Activated naive CD4-positive, alpha-beta T cell treated with anti-CD3 and anti-CD28 coated beads for 36 hours (primary cell): ENCODE measurements at regions of chr17 and their contacts with region 1.

Region 1: GRCh38 chr17:81238817-81239600 is at the starts of genes NDUFAF8 and TEPSIN:
- DNase-seq: peak; percentile 98
- H3K4me3 Mint-ChIP-seq: peak within 1 kb of the TSS; percentile 90
- H3K27ac Mint-ChIP-seq: peak within 1 kb of the TSS; percentile 96
- H3K4me1 Mint-ChIP-seq: peaks cover 37% of the 10 kb centered on the region
- H3K27me3 Mint-ChIP-seq: no peaks in the 10 kb centered on the region
- total RNA-seq, gene NDUFAF8: 75.7 to 77.0 TPM
- total RNA-seq, gene TEPSIN: 21.7 to 25.9 TPM

Region 2: DNA sequence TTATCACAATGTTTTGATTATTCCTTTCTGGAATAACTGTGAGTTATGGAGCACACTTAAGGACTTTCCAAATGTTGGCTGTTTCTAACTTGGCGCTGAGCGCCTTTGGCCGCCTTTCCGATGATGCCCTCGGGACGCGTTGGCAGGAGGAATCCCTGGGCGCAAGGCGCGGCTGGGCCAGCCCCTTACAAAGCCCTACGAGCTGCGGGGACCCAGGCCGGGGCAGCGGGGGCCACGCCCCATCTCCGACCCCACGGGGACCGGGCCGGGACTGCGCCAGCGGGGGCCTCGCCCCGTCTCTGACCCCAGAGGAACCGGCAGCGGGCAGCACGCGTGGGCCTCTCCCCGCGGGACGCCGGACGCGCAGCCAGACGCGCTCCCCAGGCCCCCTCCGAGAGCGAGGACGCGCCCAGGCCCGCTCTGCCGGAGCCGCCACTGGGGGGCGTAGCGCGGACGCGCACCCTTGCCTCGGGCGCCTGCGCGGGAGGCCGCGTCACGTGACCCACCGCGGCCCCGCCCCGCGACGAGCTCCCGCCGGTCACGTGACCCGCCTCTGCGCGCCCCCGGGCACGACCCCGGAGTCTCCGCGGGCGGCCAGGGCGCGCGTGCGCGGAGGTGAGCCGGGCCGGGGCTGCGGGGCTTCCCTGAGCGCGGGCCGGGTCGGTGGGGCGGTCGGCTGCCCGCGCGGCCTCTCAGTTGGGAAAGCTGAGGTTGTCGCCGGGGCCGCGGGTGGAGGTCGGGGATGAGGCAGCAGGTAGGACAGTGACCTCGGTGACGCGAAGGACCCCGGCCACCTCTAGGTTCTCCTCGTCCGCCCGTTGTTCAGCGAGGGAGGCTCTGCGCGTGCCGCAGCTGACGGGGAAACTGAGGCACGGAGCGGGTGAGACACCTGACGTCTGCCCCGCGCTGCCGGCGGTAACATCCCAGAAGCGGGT is 1137.7 kb before region 1 on chr17 and contains the start of gene GAA:
- CTCF ChIA-PET with region 1: no interaction called
- intact Hi-C with region 1: loop called (anchors 5 kb)
- DNase-seq: peak; percentile 84
- H3K4me3 Mint-ChIP-seq: peak within 1 kb of the TSS; percentile 92
- H3K27ac Mint-ChIP-seq: peak within 1 kb of the TSS; percentile 59
- H3K4me1 Mint-ChIP-seq: peaks cover 28% of the 10 kb centered on the region
- H3K27me3 Mint-ChIP-seq: no peaks in the 10 kb centered on the region
- total RNA-seq, gene GAA: 32.1 to 33.2 TPM

Region 3: DNA sequence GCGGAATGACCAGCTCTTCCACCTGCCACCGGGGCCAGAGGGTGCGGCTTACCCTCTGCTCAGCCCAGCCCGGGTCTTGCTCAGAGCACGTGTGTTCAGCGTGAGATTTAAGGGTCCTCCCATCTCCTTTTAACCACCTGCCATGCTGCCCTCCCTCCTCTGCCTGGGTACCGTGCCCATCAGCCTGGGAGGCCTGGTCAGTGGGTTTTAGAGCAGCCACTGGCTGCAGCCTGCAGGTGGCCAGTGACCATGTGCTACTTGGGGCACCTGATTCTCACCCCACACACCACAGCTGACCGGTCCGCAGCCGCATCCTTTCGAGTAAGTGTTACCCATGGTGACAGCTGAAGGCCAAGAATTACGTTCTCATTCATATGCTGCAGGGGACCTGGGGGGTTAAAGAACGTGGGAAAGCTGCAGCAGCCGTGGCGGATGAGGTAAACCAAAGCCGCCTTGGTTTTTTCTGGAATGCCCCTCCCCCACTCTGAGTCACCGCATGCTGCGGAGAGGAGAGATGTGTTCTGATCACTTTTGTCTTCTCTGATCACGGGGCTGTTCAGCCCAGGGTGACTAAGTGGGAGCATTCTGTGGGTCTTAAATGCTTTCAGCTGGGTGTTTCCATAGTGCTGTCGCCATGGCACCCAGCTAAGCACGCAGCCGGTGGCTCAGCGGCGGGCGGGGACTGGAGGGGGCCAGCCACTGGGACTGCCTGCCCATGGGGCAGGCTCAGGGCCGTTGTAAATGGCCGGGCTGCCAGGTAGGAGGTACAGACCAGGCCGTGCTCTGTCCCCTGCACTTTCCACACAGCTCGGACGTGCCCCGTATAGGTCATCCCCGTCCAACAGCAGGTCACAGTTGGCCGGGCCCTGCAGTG is 144.3 kb before region 1 on chr17:
- CTCF ChIA-PET with region 1: no interaction called
- intact Hi-C with region 1: loop called (anchors 1 kb)
- DNase-seq: peak; percentile 97
- H3K4me3 Mint-ChIP-seq: no peak overlapping the region
- H3K27ac Mint-ChIP-seq: no peak overlapping the region
- H3K4me1 Mint-ChIP-seq: peaks cover 30% of the 10 kb centered on the region
- H3K27me3 Mint-ChIP-seq: no peaks in the 10 kb centered on the region

Region 4: GRCh38 chr17:81142301-81143199 is 96.5 kb before region 1 on chr17:
- CTCF ChIA-PET with region 1: interaction called, 5 read pairs
- intact Hi-C with region 1: loop called (anchors 1 kb)
- DNase-seq: peak; percentile 76
- H3K4me3 Mint-ChIP-seq: no peak overlapping the region
- H3K27ac Mint-ChIP-seq: no peak overlapping the region
- H3K4me1 Mint-ChIP-seq: no peaks in the 10 kb centered on the region
- H3K27me3 Mint-ChIP-seq: no peaks in the 10 kb centered on the region

Region 5: GRCh38 chr17:81294856-81295680 is 56.1 kb after region 1 on chr17 and contains the start of gene SLC38A10:
- CTCF ChIA-PET with region 1: interaction called, 4 read pairs
- intact Hi-C with region 1: loop called (anchors 2 kb)
- DNase-seq: peak; percentile 95
- H3K4me3 Mint-ChIP-seq: peak within 1 kb of the TSS; percentile 92
- H3K27ac Mint-ChIP-seq: peak within 1 kb of the TSS; percentile 91
- H3K4me1 Mint-ChIP-seq: peaks cover 36% of the 10 kb centered on the region
- H3K27me3 Mint-ChIP-seq: no peaks in the 10 kb centered on the region
- total RNA-seq, gene SLC38A10: 29.1 to 31.9 TPM